ENCODE measurements at regions of chr2 and their contacts with region 1.

Region 1: GRCh38 chr2:231411831-231412617 is 16.5 kb downstream of the B3GNT7 start:
- DNase-seq: peak; percentile 66 to 99 (median 89)

Region 2: GRCh38 chr2:231297108-231297908 is 114.7 kb before region 1 on chr2:
- intact Hi-C with region 1: loop called (anchors 2 kb)
- DNase-seq: peak; percentile 54 to 96 (median 74)

Region 3: DNA sequence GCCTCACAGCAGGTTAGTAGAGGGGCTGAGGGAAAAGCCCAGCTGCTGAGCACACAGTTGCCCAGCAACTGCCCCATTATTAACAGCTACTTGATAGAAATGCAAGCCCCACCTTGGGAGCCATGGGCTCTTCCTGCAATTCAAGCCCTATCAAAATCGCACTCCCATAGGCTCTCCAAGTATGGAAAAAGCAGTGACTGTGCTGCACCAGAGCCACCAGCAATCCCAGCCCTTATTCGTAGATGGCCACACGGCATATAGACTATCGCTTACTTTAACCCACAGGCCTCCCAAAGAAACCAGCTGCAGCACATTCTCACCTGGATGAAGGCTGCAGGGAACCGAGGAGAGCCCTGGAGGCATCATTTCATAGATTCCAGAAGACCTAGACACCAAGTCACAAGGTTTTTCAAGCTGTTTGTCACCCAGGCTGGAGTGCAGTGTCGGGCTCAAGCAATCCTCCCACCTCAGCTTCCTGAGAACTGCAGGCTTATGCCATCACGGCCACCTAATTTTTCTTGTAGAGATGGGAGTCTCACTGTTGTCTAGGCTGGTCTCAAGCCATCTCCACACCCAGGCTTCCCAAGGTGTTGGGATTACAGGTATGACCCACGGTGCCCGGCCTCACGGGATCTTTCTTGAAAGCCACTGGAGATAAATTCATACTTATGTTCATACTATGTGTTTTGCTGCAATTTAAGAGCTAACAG is 40.9 kb after region 1 on chr2:
- intact Hi-C with region 1: loop called (anchors 5 kb)
- DNase-seq: peak in 1 of 10 donors; percentile 47